Left cardiac atrium (tissue), 4 donors: ENCODE measurements at regions of chr5 and their contacts with region 1.

Region 1: DNA sequence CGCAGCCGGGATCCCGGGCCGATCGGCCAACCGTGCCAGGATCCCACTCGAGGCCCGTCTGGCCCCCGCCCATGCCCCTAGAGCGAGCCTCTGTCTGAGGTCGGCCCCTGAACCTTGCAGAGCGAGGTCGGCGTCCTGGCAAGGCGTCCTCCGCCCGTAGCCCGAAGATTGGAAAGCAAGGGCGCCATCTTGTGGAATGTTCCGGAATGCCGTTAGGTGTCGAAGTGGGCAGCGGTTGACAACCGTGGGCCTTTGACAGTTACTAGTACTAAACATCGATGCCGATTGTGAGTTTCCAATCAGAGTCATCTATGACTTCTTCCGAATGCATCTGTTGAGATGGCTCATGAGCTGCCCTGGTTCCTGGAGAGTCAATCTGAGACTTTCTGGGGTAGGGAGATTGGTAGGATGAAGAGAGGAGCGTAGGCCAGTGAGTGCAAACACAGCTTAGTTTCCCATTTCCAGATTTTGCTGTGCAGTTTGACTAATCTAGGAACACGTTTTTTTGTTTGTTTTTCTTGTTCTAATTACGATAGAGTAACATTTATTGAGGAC is 923 bp upstream of the PLK2 start:
- DNase-seq: peak; percentile 93
- ATAC-seq: peak; percentile 81 to 87

Region 2: DNA sequence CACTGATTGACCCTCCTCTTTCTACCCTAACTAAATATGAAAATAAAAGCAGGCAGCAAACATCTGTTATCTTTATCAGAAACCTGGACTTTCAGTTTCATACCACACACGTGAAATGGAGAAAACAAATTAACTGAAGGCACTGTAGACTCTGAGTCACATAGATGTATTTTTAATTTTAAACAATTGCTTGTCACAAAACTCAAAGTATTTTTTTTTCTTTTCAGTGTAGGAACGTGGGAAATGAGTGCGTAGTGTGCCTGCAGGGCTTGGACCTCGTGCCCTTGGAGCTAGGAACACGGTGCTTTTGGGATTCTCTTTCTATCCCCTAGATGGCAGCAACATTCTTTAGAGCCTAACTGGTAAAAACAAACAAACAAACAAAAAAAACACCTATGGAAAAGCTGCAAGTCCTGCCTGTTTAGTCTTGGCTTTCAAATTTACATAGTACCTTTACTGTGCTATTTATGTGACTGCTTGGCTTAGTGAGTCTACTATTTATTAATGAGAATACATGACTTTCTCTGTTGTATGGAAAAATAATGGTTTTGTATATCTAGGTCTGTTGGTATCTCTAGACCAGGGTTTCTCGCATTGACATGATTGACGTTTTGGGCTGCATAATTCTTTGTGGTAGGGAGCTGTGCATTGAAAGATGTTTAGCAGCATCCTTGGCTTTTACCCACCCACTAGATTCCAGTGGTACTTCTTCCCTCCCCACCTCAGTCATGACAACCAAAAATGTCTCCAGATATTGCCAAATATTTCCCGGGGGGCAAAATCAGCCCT is 961.4 kb before region 1 on chr5:
- intact Hi-C with region 1: loop called (anchors 5 kb)
- DNase-seq: no peak
- ATAC-seq: peak; percentile 32

Region 3: DNA sequence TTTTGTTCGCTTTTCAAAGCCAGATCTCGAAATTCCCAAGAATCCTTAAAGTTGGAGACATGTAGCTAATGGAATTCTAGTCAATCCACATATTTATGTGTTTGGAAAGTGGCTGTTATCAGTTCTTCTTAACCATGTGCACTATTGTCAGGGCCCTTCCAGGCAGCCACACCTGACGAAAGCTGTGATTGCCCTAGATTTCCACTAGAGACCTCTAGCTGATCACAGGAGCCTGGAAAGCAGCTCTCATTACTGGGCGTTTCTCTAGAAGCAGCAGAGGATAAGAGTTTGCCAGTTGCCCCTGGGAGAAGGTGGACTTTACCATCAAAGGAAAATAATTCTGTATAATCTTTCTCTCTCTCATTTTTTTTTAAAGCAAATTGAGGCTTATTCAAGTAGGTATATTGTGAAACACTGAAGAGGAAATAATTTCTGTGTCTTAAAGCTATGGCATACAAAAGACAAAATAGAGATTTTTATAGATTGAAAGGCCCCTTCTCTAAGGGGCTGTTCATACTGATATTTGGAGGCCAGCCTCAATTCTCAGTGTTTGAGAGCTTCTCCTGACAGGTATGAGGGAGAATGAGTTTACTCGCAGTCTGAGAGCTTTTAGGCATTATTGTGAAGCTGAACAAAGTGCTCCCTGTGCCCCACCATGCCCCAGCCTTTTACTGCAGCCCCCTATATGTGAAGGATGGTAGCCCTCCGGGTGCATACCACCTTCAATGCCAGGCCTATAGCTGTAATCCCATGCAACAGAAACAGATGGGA is 572.8 kb before region 1 on chr5:
- intact Hi-C with region 1: loop called (anchors 1 to 5 kb)
- DNase-seq: peak; percentile 36
- ATAC-seq: peak; percentile 87 to 96

Region 4: DNA sequence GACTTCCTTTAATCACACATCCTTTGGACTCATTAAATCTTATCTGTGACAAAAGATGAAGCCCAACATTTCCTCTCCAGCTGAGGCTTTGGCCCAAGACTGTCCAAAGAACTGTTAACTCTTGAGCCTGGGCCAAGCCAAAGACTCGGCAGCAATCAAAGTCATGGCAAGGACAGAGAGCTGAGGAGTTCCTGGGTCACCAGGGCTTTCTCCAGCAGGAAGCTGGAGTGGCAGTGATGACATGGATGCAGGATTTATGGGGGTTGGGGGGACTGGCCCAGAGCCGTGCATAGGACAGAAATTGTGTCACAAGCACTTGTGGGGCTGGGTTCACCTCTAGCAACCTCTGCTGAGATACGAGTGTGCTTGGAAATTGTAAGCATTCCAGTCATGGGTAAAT is 441.2 kb before region 1 on chr5:
- intact Hi-C with region 1: loop called in 1 of 2 experiments (anchors 10 kb)
- DNase-seq: peak; percentile 68
- ATAC-seq: peak; percentile 90 to 91

Region 5: DNA sequence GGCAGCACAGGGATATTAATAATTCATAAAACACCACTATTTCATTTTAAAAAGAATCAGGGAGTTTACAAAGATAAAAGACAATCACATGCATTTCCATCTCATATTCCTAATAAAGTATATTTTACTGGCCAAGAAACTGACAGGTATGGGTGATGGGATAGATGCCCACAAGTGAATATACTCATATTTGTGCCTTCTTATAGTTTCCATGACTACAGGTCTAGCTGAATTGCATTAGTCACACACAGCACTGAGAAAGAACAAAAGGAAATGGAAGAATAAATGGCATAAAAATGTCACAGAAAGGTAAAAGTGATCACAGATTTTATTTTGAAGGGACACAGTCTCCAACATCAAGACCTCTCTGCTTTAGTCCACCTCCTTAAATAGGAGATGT is 194.4 kb before region 1 on chr5:
- intact Hi-C with region 1: no loop called
- DNase-seq: no peak
- ATAC-seq: no peak

Region 6: GRCh38 chr5:58366461-58366860 is 94.3 kb before region 1 on chr5:
- intact Hi-C with region 1: loop called in 1 of 2 experiments (anchors 10 kb)
- DNase-seq: no peak
- ATAC-seq: peak; percentile 88